Right ventricle myocardium superior (tissue), 1 donor: ENCODE measurements at regions of chr13 and their contacts with region 1.

Region 1: GRCh38 chr13:25574437-25575411 is 202.9 kb downstream of the ATP8A2 start:
- DNase-seq: peak; percentile 47
- ATAC-seq: peak; percentile 95

Region 2: GRCh38 chr13:25132751-25133390 is 441.9 kb before region 1 on chr13:
- intact Hi-C with region 1: no loop called
- DNase-seq: no peak
- ATAC-seq: no peak

Region 3: DNA sequence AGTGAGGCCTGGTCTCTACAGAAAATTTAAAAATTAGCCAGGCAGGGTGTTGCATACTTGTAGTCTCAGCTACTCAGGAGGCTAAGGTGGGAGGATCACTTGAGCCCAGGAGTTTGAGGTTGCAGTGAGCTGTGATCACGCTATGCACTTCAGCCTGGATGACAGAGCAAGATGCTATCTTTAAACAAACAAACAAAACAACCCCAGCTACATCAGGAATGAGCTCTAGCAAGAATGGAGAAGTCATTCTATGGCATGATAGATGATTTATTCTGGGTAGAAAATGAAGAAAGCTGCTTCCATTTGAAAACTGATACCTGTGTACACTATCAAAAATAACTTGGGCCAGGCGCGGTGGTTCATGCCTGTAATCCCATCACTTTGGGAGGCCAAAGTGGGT is 492.9 kb after region 1 on chr13:
- intact Hi-C with region 1: loop called (anchors 5 kb)
- DNase-seq: no peak
- ATAC-seq: no peak